CD4-positive, alpha-beta T cell (primary cell): ENCODE measurements at regions of chr1 and their contacts with region 1.

Region 1: DNA sequence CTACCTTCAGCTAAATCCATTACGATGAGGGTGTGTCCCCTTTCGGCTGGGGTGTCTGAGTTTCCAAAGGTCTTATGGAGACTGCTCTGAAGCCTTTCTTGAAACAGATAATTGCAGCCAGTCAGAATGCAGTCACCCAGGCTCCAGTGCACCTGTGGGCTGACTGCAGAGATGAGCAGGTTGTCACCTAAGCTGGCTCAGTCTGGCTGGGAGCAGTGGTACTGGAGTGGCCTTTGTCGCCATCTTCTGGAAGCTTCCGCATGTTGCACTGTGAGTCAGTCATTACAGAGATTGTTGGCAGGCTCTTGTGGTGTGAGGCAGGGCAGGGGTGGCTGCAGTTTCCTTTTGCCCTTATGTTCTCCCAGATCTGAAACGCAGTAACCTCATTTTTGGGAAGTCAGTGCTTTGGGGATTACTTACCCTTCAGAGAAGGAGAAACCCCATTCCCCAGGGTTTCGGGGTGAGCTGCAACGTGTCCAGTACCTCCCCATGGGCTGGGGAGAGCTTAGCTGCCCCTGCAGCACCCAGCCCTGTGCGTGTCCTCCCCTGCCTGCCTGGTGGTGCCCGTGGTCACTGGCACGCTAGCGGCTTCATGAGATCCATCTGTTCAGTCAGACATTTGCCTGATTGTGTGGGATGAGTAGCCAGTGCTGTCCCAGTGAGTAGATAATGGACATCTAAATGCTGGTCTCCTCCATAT is 48.0 kb downstream of the SMYD2 start:
- DNase-seq: peak; percentile 66 to 87 (median 72)
- ATAC-seq: peak; percentile 98
- H3K4me3 ChIP-seq: no peak overlapping the region
- H3K4me3 Mint-ChIP-seq: no peak overlapping the region
- H3K27ac ChIP-seq: no peak overlapping the region
- H3K27ac Mint-ChIP-seq: peak overlapping the region; percentile 53
- H3K4me1 ChIP-seq: no peaks in the 10 kb centered on the region
- H3K4me1 Mint-ChIP-seq: no peaks in the 10 kb centered on the region
- H3K27me3 ChIP-seq: no peaks in the 10 kb centered on the region
- H3K27me3 Mint-ChIP-seq: no peaks in the 10 kb centered on the region
- CTCF ChIP-seq: peak; percentile 83

Region 2: DNA sequence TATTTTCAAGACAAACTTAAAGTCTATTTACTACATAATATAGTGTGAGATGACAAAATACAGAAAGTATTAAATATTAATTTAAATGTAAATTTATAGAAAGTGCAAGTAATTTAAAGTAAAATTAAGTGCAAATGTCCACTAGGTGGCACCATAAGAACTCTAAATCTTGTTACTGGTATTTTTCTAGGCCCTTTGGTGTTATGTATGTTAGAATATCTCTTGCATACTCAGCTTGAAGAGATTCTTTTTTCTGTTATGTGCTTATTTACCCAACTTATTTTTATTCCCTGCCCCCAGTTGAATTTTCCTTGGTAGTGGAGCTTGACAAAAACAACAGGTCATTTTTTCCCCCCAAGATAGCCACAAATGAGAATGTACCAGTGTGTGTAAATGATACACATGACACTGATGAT is 1206.4 kb before region 1 on chr1:
- CTCF ChIA-PET with region 1: no interaction called
- POLR2A ChIA-PET with region 1: no interaction called
- intact Hi-C with region 1: loop called (anchors 2 to 10 kb)
- DNase-seq: peak in 3 of 14 experiments; percentile 31 to 43 (median 42)
- ATAC-seq: no peak
- H3K4me3 ChIP-seq: no peak overlapping the region
- H3K4me3 Mint-ChIP-seq: no peak overlapping the region
- H3K27ac ChIP-seq: no peak overlapping the region
- H3K27ac Mint-ChIP-seq: no peak overlapping the region
- H3K4me1 ChIP-seq: no peaks in the 10 kb centered on the region
- H3K4me1 Mint-ChIP-seq: no peaks in the 10 kb centered on the region
- H3K27me3 ChIP-seq: no peaks in the 10 kb centered on the region
- H3K27me3 Mint-ChIP-seq: no peaks in the 10 kb centered on the region
- CTCF ChIP-seq: peak; percentile 83

Region 3: GRCh38 chr1:213374369-213374768 is 954.6 kb before region 1 on chr1:
- CTCF ChIA-PET with region 1: no interaction called
- POLR2A ChIA-PET with region 1: interaction called, 3 read pairs
- intact Hi-C with region 1: loop called (anchors 2 to 5 kb)
- DNase-seq: peak; percentile 16 to 66 (median 42)
- ATAC-seq: no peak
- H3K4me3 ChIP-seq: no peak overlapping the region
- H3K4me3 Mint-ChIP-seq: no peak overlapping the region
- H3K27ac ChIP-seq: no peak overlapping the region
- H3K27ac Mint-ChIP-seq: no peak overlapping the region
- H3K4me1 ChIP-seq: no peaks in the 10 kb centered on the region
- H3K4me1 Mint-ChIP-seq: no peaks in the 10 kb centered on the region
- H3K27me3 ChIP-seq: no peaks in the 10 kb centered on the region
- H3K27me3 Mint-ChIP-seq: no peaks in the 10 kb centered on the region
- CTCF ChIP-seq: peak; percentile 77

Region 4: DNA sequence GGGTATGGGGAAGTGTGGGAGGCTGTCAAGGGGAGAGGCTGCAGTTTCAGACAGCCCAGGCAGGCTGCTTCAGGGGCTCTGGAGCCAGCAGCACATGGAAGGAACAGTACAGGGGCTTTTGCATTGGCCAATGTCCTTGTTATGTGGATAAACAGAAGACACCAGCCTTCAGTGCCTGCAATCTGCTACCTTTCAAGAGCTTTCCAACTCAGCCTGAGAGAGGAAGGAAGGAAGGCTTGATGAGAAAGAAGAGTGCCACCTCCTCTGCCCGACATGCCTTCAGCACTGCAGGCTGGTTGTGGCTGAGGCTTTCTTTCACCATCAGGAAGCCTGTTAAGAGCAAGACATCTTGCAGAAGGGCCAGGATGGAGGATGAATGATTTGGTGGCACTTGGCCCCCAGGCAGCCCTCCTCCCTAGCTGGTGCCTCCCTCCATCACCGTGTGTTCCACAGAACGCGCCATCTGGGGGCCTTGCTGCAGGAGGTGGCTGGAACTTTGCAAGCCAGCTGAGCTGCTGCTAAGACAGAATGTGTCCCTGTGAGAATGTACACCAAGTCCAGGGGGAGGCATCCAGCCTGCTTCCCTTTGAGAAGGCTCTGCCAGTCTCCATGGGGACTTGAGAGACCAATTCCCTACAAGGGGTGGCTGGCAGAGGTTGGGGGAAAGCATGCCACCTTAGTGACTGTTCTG is 713.5 kb before region 1 on chr1:
- CTCF ChIA-PET with region 1: no interaction called
- POLR2A ChIA-PET with region 1: no interaction called
- intact Hi-C with region 1: no loop called
- DNase-seq: no peak
- ATAC-seq: no peak
- H3K4me3 ChIP-seq: no peak overlapping the region
- H3K4me3 Mint-ChIP-seq: no peak overlapping the region
- H3K27ac ChIP-seq: no peak overlapping the region
- H3K27ac Mint-ChIP-seq: no peak overlapping the region
- H3K4me1 ChIP-seq: no peaks in the 10 kb centered on the region
- H3K4me1 Mint-ChIP-seq: no peaks in the 10 kb centered on the region
- H3K27me3 ChIP-seq: peaks cover 0 to 8% of the 10 kb centered on the region in 2 experiments
- H3K27me3 Mint-ChIP-seq: peaks cover 20% of the 10 kb centered on the region
- CTCF ChIP-seq: no peak

Region 5: DNA sequence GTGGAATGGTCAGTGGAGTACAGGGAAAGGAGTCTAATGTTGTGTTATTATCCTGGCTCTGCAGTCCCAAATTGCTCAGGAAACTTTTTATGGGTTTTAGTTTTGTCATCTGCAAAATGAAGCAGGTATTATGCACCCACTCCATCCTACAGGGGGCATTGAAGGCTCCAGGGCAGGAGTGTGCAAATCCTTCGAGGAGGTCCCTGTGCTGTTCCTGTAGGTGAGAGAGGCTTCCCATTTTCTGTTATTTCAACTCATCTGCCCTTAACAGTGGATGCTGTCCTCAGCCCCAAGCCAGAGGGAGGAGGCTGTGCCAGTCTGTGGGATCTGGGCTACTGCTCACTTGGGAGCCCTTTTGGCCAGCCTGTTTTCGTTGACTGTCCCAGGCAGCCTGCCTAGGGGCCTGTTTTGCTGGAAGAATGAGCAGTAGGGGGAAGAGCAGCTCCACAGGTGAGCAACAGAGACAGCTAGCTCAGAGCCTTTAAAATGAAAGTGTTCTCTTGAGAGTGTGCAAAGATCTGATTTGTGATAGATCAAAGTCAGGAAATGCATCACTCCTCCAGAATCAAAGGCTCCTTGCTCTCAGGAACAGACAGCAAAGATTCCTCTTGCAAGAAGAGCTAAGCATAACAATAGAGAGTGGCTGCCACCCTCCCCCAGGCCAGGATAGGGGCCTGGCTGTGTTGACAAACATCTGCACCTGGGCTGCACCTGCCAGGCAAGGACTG is 658.8 kb before region 1 on chr1:
- CTCF ChIA-PET with region 1: no interaction called
- POLR2A ChIA-PET with region 1: no interaction called
- intact Hi-C with region 1: loop called (anchors 2 to 5 kb)
- DNase-seq: peak; percentile 20 to 78 (median 36)
- ATAC-seq: peak; percentile 89
- H3K4me3 ChIP-seq: no peak overlapping the region
- H3K4me3 Mint-ChIP-seq: peak overlapping the region; percentile 40
- H3K27ac ChIP-seq: no peak overlapping the region
- H3K27ac Mint-ChIP-seq: peak overlapping the region; percentile 88
- H3K4me1 ChIP-seq: peaks cover 13% of the 10 kb centered on the region
- H3K4me1 Mint-ChIP-seq: peaks cover 38% of the 10 kb centered on the region
- H3K27me3 ChIP-seq: no peaks in the 10 kb centered on the region
- H3K27me3 Mint-ChIP-seq: no peaks in the 10 kb centered on the region
- CTCF ChIP-seq: peak; percentile 49

Region 6: DNA sequence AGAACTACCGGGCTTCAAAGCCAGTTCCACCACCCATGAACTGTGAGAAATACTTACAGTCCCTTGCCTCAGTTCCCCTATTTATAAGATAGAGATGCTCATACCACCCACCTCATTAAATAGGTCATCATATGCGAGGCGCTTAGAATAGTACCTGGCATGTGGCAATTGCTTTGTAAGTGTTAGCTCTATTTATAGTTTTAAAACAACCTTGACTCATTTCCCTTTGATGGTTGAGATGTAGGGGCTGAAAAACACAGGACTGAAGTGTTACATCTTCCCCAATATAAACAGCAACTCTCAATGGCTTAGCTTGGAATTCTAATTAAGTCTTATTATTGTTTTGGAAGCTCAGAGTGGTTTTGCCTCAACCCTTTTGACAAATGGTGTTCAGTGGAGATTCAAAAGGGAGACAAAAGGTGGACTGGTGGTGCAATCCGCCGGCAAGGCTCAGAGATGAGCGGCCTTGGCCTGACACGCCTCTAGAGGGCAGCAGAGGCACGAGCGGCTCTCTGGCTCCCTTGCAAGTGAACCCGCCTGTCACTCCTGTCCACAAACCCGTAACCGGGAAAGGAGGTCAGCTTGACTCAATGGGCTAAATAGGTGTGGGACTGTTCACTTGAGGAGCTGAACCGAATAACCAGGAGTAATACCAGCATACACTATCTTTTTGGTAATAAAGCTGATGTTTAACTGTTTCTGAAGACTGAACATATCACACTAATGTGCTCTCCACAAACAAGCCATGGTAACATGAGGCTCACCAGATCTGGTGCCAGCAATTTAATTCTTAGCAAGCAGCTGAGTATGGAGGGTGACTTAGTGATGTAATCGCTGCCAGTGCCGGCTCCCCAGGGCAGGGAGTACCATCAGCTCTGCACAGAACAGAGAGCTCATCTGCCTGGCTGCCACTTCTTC is 67.5 kb before region 1 on chr1:
- CTCF ChIA-PET with region 1: interaction called, 171 read pairs
- POLR2A ChIA-PET with region 1: interaction called, 13 read pairs
- intact Hi-C with region 1: loop called (anchors 1 kb)
- DNase-seq: peak; percentile 60 to 89 (median 78)
- ATAC-seq: peak; percentile 95
- H3K4me3 ChIP-seq: no peak overlapping the region
- H3K4me3 Mint-ChIP-seq: no peak overlapping the region
- H3K27ac ChIP-seq: no peak overlapping the region
- H3K27ac Mint-ChIP-seq: no peak overlapping the region
- H3K4me1 ChIP-seq: peaks cover 5% of the 10 kb centered on the region
- H3K4me1 Mint-ChIP-seq: no peaks in the 10 kb centered on the region
- H3K27me3 ChIP-seq: peaks cover 6 to 32% of the 10 kb centered on the region in 2 experiments
- H3K27me3 Mint-ChIP-seq: peaks cover 85% of the 10 kb centered on the region
- CTCF ChIP-seq: peak; percentile 91

Region 7: DNA sequence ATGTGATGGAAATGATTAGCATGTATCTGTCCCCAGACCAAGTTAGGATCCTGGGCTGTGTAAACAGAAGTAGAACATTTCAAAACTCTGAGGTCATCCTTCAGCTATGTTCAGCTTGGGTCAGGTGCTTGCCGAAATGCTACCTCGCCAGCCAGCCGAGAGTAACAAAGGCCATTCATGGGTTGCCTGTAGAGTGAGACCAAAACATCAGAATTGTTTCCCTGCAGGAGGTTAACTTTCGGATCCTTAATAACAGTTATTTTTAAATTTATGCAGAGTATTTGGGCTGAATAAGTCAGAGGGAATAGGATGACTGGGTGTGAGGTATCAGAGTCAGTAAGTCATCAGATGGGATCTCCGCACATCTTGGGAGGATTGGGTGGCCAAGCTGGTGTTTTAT is 12.3 kb before region 1 on chr1:
- CTCF ChIA-PET with region 1: interaction called, 12 read pairs
- POLR2A ChIA-PET with region 1: no interaction called
- intact Hi-C with region 1: no loop called
- DNase-seq: no peak
- ATAC-seq: no peak
- H3K4me3 ChIP-seq: no peak overlapping the region
- H3K4me3 Mint-ChIP-seq: no peak overlapping the region
- H3K27ac ChIP-seq: no peak overlapping the region
- H3K27ac Mint-ChIP-seq: no peak overlapping the region
- H3K4me1 ChIP-seq: no peaks in the 10 kb centered on the region
- H3K4me1 Mint-ChIP-seq: no peaks in the 10 kb centered on the region
- H3K27me3 ChIP-seq: no peaks in the 10 kb centered on the region
- H3K27me3 Mint-ChIP-seq: no peaks in the 10 kb centered on the region
- CTCF ChIP-seq: no peak

Region 8: DNA sequence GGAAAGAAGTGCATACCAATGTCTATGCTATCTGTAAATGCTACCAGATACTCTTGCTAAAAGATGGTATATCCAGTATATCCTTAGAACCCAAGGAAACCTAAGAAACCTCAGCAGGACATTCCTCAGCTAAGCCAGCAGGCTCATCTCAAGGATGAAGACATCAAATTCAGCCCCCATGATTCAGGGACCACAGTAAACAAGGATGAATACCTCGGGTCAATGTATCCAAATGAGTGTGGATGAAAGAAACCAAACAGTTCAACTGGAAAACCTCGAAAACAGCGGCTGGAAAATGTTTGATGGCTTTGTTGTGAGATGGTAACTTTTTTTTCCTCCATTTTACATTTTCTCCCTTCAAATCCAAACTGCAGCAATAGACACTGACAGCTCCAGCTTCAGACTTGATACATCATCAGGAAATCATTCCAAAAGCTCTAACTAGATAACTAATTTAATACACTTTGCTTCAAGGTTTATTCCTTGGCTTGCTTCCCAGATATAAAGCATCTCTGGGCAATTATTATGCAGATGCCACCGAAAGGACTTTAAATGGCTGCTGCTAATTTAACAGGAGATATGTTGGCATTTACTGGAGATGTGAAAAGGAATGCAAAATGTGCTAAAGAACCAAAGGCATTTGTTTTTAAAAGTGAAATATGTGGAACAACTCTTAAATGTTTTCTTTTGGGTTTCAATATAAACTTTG is 25.7 kb after region 1 on chr1:
- CTCF ChIA-PET with region 1: no interaction called
- POLR2A ChIA-PET with region 1: no interaction called
- intact Hi-C with region 1: no loop called
- DNase-seq: no peak
- ATAC-seq: no peak
- H3K4me3 ChIP-seq: no peak overlapping the region
- H3K4me3 Mint-ChIP-seq: no peak overlapping the region
- H3K27ac ChIP-seq: no peak overlapping the region
- H3K27ac Mint-ChIP-seq: no peak overlapping the region
- H3K4me1 ChIP-seq: no peaks in the 10 kb centered on the region
- H3K4me1 Mint-ChIP-seq: no peaks in the 10 kb centered on the region
- H3K27me3 ChIP-seq: no peaks in the 10 kb centered on the region
- H3K27me3 Mint-ChIP-seq: no peaks in the 10 kb centered on the region
- CTCF ChIP-seq: no peak

Region 9: DNA sequence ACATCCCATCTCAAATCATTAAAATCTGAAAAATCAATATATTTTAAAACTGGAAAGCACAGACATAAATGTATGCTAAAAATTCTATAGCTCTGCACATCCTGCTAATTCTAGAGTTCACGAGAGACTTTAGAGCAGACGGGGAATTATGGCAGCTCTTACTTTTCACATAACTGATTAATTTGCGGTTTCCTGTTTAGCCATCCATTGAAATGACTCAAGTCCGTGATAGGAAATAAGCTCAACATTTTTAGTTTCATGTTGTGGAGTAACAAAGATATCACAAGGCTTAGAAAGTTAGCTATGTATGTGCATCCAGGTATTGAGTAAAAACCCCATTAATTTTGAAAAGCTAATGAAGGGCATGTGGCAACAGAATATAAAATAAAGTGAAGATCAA is 75.2 kb after region 1 on chr1:
- CTCF ChIA-PET with region 1: no interaction called
- POLR2A ChIA-PET with region 1: no interaction called
- intact Hi-C with region 1: no loop called
- DNase-seq: no peak
- ATAC-seq: no peak
- H3K4me3 ChIP-seq: no peak overlapping the region
- H3K4me3 Mint-ChIP-seq: no peak overlapping the region
- H3K27ac ChIP-seq: no peak overlapping the region
- H3K27ac Mint-ChIP-seq: no peak overlapping the region
- H3K4me1 ChIP-seq: no peaks in the 10 kb centered on the region
- H3K4me1 Mint-ChIP-seq: no peaks in the 10 kb centered on the region
- H3K27me3 ChIP-seq: no peaks in the 10 kb centered on the region
- H3K27me3 Mint-ChIP-seq: peaks cover 2% of the 10 kb centered on the region
- CTCF ChIP-seq: no peak

Region 10: DNA sequence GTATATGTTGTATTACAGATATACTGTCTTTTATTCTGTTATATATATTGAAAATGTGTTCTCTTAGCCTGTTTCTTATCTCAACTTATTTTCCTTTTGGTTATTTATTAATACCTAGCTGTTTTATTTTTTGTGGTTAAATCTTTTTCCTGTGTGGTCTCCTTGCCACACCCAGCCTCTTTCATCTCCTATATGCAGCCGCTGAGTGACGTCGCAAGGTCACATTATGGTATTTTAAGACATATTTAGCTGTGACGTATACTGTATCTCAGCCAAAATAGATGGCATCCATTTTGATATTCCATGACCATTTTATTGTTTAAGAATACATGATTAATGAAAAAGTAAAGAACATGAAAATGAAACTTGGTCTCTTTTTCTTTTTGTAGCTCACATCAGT is 303.2 kb after region 1 on chr1:
- CTCF ChIA-PET with region 1: interaction called, 3 read pairs
- POLR2A ChIA-PET with region 1: no interaction called
- intact Hi-C with region 1: loop called in 1 of 2 experiments (anchors 2 kb)
- DNase-seq: peak in 10 of 14 experiments; percentile 18 to 84 (median 46)
- ATAC-seq: peak; percentile 82
- H3K4me3 ChIP-seq: no peak overlapping the region
- H3K4me3 Mint-ChIP-seq: peak overlapping the region; percentile 80
- H3K27ac ChIP-seq: no peak overlapping the region
- H3K27ac Mint-ChIP-seq: peak overlapping the region; percentile 87
- H3K4me1 ChIP-seq: peaks cover 8% of the 10 kb centered on the region
- H3K4me1 Mint-ChIP-seq: peaks cover 46% of the 10 kb centered on the region
- H3K27me3 ChIP-seq: no peaks in the 10 kb centered on the region
- H3K27me3 Mint-ChIP-seq: no peaks in the 10 kb centered on the region
- CTCF ChIP-seq: no peak